GM13976 (cell line): ENCODE measurements at regions of chr17 and their contacts with region 1.

Region 1: DNA sequence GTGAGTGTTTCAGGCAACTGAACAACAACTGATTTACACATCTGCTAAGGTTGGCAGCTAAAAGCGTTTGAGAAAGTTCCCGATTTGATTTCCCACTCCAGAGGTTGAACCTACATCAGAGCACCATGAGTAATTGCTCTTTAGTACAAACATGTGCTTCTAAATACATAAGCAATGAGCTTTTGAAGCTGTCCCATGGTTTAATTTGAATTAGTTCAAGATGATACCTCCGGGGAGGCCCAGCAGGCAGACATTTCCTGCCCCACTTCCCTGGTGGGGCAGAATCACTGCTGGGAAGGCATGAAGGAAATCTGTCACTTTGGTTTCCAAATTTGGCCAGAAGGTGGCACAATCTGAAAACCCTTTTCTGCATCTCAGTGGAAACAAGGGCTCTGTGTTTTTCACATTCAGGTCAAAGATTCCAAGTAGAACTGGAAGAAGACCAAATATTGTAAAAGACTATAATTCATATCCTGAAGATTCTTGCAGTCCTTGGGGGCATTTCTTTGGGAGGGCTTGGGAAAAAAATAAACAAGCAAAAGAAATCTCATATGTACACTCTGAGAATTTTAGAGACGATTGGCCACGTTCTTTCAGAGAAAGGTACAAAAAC is 176.2 kb upstream of the FAM20A start:
- DNase-seq: no peak
- CTCF ChIP-seq: peak; percentile 55

Region 2: GRCh38 chr17:68719431-68719830 is 57.9 kb before region 1 on chr17:
- in situ Hi-C with region 1: no loop called
- DNase-seq: no peak
- CTCF ChIP-seq: no peak

Region 3: GRCh38 chr17:69228576-69228975 is 451.2 kb after region 1 on chr17 and contains the start of gene ABCA10:
- in situ Hi-C with region 1: loop called (anchors 5 kb)
- DNase-seq: no peak
- CTCF ChIP-seq: no peak

Region 4: GRCh38 chr17:69523244-69523861 is 746.0 kb after region 1 on chr17:
- in situ Hi-C with region 1: loop called (anchors 25 kb)
- DNase-seq: peak; percentile 41
- CTCF ChIP-seq: peak; percentile 32